Cardiac septum (tissue), 1 donor: ENCODE measurements at regions of chr4 and their contacts with region 1.

Region 1: GRCh38 chr4:11428899-11429698 is 405 bp upstream of the HS3ST1 start:
- DNase-seq: peak; percentile 85

Region 2: GRCh38 chr4:10582059-10582686 is 846.9 kb before region 1 on chr4:
- intact Hi-C with region 1: loop called (anchors 10 kb)
- DNase-seq: no peak

Region 3: DNA sequence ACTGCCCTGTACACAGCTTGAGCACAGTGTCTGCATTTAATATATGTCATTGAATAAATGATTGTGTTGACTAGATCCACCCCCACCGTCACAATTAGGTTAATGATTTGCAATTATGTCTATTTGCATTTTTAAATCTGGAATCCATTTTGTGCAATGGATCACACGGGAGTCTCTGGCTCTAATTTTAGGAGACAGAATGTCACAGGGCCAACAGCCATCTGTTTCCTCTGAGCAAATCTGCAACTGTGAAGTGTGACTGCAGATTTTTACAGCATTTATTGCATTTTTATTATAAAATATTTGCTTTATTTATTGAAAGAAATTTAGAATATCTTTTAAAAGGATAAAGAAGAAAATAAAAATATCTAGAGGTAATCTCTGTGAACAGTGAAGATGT is 317.2 kb before region 1 on chr4:
- intact Hi-C with region 1: no loop called
- DNase-seq: no peak

Region 4: GRCh38 chr4:11640584-11640983 is 211.5 kb after region 1 on chr4:
- intact Hi-C with region 1: no loop called
- DNase-seq: no peak

Region 5: GRCh38 chr4:11710453-11711093 is 281.5 kb after region 1 on chr4:
- intact Hi-C with region 1: loop called (anchors 10 kb)
- DNase-seq: no peak